RWPE1 (cell line): ENCODE measurements at regions of chr2 and their contacts with region 1.

Region 1: GRCh38 chr2:84925724-84926376 is 20.4 kb downstream of the TMSB10 start:
- DNase-seq: peak; percentile 72
- H3K27ac ChIP-seq: peak overlapping the region; percentile 98
- CTCF ChIP-seq: peak; percentile 93

Region 2: DNA sequence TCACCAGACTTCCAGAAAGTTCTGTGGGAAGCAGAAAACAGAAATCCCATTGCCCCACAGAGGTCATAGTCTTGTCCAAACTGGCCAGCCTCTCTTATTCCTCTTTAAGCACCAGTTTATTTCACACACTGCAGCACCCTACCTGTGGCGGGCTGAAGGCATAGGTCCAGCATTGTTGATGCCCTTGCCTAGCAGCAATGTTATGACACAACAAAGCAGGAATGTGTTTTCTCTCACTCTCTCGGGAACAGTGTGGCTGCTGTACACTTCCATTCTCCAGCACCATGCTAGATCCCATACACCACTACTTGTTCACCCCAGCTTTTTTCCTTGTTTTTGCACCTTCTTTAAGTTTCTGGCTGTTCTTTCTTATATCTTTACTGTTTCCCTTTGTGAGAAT is 228.0 kb before region 1 on chr2:
- CTCF ChIA-PET with region 1: no interaction called
- POLR2A ChIA-PET with region 1: no interaction called
- DNase-seq: peak; percentile 16
- H3K27ac ChIP-seq: no peak overlapping the region
- CTCF ChIP-seq: no peak

Region 3: GRCh38 chr2:84905181-84906107 is 20.4 kb before region 1 on chr2 and contains the start of gene TMSB10:
- CTCF ChIA-PET with region 1: interaction called, 16 read pairs
- POLR2A ChIA-PET with region 1: interaction called, 15 read pairs
- DNase-seq: peak; percentile 90
- H3K27ac ChIP-seq: peak within 1 kb of the TSS; percentile 99
- CTCF ChIP-seq: no peak

Region 4: GRCh38 chr2:84946204-84947009 is 20.6 kb after region 1 on chr2:
- CTCF ChIA-PET with region 1: interaction called, 20 read pairs
- POLR2A ChIA-PET with region 1: no interaction called
- DNase-seq: peak; percentile 93
- H3K27ac ChIP-seq: peak overlapping the region; percentile 97
- CTCF ChIP-seq: no peak

Region 5: GRCh38 chr2:85015653-85016360 is 90.0 kb after region 1 on chr2:
- CTCF ChIA-PET with region 1: interaction called, 14 read pairs
- POLR2A ChIA-PET with region 1: no interaction called
- DNase-seq: no peak
- H3K27ac ChIP-seq: no peak overlapping the region
- CTCF ChIP-seq: no peak